ENCODE measurements at regions of chr21 and their contacts with region 1.

Region 1: GRCh38 chr21:37251294-37251634 is 15.9 kb downstream of the VPS26C start:
- DNase-seq: no peak
- ATAC-seq: no peak
- H3K4me3 ChIP-seq: no peak overlapping the region
- H3K4me3 Mint-ChIP-seq: no peak overlapping the region
- H3K27ac ChIP-seq: no peak overlapping the region
- H3K27ac Mint-ChIP-seq: no peak overlapping the region
- H3K4me1 ChIP-seq: peaks cover 0 to 3% of the 10 kb centered on the region in 2 experiments
- H3K4me1 Mint-ChIP-seq: peaks cover 50 to 65% (median 59%) of the 10 kb centered on the region in 3 donors
- H3K27me3 ChIP-seq: no peaks in the 10 kb centered on the region
- H3K27me3 Mint-ChIP-seq: no peaks in the 10 kb centered on the region

Region 2: DNA sequence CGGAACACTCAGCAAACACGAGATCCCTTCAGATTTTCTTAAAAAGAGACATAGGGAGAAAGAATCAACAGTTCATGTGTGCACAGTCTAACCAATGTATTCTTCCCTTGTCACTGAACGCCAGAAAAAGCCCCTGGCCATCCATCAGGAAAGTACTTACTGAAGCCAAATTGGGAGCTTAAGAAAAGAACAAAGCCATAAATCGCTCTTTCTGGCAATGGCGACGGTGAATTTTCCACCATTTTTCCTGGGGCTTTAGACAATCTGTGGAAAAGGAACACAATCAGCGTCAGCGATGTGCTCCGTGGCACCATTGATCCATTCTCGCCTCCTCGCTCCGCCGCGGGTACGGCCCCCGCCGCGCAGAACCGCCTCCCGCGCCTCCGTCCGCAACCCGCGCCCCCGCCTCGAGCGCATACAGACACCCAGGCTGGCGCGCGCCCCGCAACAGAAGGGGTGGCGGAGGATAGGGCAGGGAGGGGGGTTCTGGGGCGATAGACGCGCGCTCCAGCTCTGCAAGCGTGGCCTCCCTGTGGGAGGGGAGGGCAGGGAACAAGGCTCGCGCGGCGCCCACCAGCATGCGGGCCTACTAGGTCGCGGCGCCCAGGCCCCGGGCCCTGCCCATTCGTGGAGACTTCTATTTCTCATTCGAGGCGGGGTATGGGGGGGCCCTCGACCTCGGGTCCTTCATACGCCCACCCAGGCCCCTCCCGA is 178.8 kb before region 1 on chr21:
- CTCF ChIA-PET with region 1: interaction called in 1 of 2 experiments, 19 read pairs
- POLR2A ChIA-PET with region 1: no interaction called
- DNase-seq: peak in 26 of 35 experiments; percentile 50 to 82 (median 70)
- ATAC-seq: peak; percentile 48 to 59 (median 53)
- H3K4me3 ChIP-seq: peak overlapping the region; percentile 68 to 78
- H3K4me3 Mint-ChIP-seq: peak overlapping the region; percentile 78 to 93 (median 85)
- H3K27ac ChIP-seq: peak overlapping the region; percentile 91
- H3K27ac Mint-ChIP-seq: peak overlapping the region; percentile 84 to 88
- H3K4me1 ChIP-seq: peaks cover 19 to 22% of the 10 kb centered on the region in 2 experiments
- H3K4me1 Mint-ChIP-seq: peaks cover 47 to 50% (median 48%) of the 10 kb centered on the region in 3 donors
- H3K27me3 ChIP-seq: no peaks in the 10 kb centered on the region
- H3K27me3 Mint-ChIP-seq: no peaks in the 10 kb centered on the region

Region 3: DNA sequence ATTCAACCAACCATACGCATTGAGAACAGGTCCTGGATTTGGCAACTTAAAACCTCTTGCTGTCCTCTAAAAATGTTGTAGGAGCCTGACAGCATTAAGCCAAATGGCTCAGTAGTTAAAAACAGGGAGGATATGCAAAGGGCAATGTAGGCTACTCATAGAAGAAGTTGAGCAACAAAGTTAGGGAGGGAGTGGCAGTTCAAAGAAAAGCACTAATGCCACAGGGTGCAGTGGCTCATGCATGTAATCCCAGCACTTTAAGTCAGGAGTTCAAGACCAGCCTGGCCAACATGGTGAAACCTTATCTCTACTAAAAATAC is 1339.9 kb after region 1 on chr21:
- CTCF ChIA-PET with region 1: no interaction called
- POLR2A ChIA-PET with region 1: no interaction called
- DNase-seq: no peak
- ATAC-seq: no peak
- H3K4me3 ChIP-seq: no peak overlapping the region
- H3K4me3 Mint-ChIP-seq: no peak overlapping the region
- H3K27ac ChIP-seq: no peak overlapping the region
- H3K27ac Mint-ChIP-seq: no peak overlapping the region
- H3K4me1 ChIP-seq: no peaks in the 10 kb centered on the region
- H3K4me1 Mint-ChIP-seq: no peaks in the 10 kb centered on the region
- H3K27me3 ChIP-seq: peaks cover 0 to 10% of the 10 kb centered on the region in 2 experiments
- H3K27me3 Mint-ChIP-seq: peaks cover 7 to 12% of the 10 kb centered on the region in 2 donors

Measured in T-cell (primary cell).